Lower leg skin (tissue), 4 donors: ENCODE measurements at regions of chr5 and their contacts with region 1.

Region 1: DNA sequence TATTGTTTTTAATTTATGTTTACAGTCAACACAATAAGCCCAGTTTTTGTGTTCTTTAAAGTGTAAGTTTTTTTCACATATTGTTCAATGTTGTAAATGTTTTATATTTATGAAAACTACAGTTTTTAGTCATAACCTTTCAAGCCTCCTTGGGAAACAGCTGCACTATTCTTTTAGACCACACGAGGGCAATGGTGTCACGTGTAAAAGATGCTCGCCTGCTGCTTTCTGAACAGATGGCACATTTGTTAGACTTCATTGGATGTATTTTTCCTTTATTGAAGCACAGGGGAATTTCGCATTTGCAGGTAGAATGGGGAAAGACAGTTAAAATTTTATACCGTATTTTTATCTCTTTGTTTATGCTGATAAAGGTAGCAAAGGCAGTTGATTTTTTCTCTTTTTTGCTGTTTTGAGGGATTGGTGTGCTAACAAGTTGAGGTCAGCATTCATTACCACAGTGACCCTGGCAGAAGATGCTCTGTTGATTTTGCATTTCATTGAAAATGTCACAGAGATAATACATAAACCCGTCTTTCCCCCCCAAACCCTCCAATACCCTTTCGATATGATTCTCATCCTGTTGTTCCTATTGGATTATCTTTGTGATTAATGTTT is 59.0 kb downstream of the MAT2B start:
- DNase-seq: peak in 1 of 2 donors; percentile 44
- H3K4me3 ChIP-seq: no peak overlapping the region
- CTCF ChIP-seq: peak in 1 of 3 donors; percentile 40
- POLR2A ChIP-seq: no peak

Region 2: DNA sequence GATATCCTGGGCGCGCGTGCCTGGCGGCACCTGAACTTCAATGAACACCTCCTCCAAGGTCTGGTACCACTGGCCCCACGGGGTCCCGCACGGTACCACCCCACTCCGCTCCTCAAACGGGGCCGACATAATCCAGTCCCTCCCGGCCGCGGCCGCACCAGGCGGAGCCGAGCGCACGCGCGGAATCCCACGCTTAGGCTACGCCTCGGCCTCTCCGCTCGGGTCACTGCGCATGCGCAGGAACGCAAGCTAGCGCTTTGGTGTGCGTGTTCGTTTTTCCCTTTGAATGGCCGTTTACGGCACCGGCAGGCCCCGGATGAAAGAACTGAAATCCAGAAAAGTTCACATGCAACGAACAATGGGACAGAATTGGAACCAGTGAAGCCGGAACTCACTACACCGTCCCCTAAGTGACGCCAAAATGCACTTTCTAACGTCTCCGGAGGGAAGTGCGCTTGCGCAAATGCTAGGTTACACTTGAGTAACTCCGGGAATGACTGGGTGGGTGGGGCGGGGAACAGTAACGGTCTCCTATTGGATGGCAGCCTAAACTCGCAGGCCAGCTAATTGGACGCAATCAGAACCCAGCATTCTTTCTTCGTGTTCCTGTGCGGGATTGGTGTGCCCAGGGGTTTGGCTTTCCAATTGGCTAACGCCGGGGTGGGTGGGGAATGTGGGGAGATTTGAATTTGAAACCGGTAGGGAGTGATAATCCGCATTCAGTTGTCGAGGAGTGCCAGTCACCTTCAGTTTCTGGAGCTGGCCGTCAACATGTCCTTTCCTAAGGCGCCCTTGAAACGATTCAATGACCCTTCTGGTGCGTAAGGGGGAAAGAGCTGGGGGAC is 104.3 kb before region 1 on chr5 and contains the starts of genes HMMR and NUDCD2:
- intact Hi-C with region 1: no loop called
- DNase-seq: peak; percentile 97 to 98
- H3K4me3 ChIP-seq: peak within 1 kb of the TSS; percentile 58
- CTCF ChIP-seq: no peak
- POLR2A ChIP-seq: peak in 1 of 2 donors; percentile 21
- total RNA-seq, gene HMMR: 2.6 to 4.3 (median 3.0) TPM
- total RNA-seq, gene NUDCD2: 3.1 to 8.5 (median 6.7) TPM

Region 3: GRCh38 chr5:163535290-163535689 is 29.1 kb before region 1 on chr5:
- intact Hi-C with region 1: no loop called
- DNase-seq: no peak
- H3K4me3 ChIP-seq: no peak overlapping the region
- CTCF ChIP-seq: no peak
- POLR2A ChIP-seq: no peak

Region 4: GRCh38 chr5:163612358-163613149 is 48.1 kb after region 1 on chr5:
- intact Hi-C with region 1: no loop called
- DNase-seq: no peak
- H3K4me3 ChIP-seq: no peak overlapping the region
- CTCF ChIP-seq: no peak
- POLR2A ChIP-seq: no peak

Region 5: DNA sequence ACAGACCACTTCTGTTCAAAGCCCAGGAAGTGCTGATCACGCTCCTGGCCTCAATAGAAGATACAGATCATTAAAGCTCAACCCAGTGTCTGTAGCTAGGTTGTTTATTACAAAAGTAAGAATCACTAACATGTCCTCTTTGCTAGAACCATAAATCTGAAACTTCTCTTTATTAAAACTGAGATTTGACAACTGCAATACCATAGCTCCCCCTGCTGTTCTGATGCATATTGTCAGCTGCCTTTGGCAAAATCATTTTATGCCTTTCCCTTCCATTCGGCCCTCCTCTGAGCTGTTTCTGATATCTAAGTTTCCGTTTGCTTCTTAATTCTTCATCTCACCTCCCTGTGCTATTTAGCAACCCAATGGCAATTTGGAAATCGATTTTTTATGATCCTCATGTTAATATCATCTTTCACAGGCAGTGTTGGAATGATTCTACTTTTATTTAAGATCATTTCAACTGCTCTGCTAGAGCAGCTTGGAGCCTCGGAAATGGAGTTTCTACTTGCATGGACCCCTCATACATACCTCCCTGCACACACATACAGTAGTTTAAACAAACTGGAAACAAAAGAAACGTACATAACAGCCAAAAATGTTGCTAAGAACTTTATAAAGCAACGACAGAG is 939.8 kb after region 1 on chr5:
- intact Hi-C with region 1: loop called (anchors 10 kb)
- DNase-seq: no peak
- H3K4me3 ChIP-seq: no peak overlapping the region
- CTCF ChIP-seq: no peak
- POLR2A ChIP-seq: no peak